ENCODE measurements at regions of chr7 and their contacts with region 1.

Region 1: GRCh38 chr7:94289071-94289470 is 105.6 kb upstream of the COL1A2 start:
- DNase-seq: peak; percentile 64 to 86
- ATAC-seq: peak; percentile 94 to 99
- H3K4me3 ChIP-seq: no peak overlapping the region
- H3K27ac ChIP-seq: 0 out of 6 replicates have a peak overlapping the region, but pooled peaks of 1 of the 2 experiments have one; percentile 17
- H3K4me1 ChIP-seq: 0 out of 3 replicates have a peak, but pooled peaks cover 5% of the 10 kb centered on the region
- CTCF ChIP-seq: peak; percentile 91
- EP300 ChIP-seq: no peak
- POLR2A ChIP-seq: no peak
- RAD21 ChIP-seq: peak; percentile 93 to 100

Region 2: DNA sequence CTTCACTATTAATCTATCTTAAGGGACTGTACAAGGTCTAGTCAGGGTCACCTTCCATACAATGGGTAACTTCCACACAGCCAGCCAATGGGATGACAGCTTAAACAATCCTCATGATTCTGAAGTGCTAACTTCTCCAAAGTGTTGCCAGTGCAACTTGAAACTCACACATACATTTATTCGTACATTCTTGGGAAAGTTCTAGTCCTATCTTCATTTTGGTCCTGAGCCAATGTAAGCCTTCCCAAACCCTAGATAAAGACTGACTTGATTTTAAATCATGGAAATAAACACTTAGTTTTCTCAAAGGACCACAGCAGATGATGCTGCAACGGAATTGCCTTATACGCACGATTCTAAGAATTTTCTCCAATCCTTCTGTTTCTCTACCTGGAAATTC is 11.8 kb before region 1 on chr7:
- CTCF ChIA-PET with region 1: interaction called, 12 read pairs
- POLR2A ChIA-PET with region 1: no interaction called
- DNase-seq: no peak
- ATAC-seq: peak in 1 of 2 experiments; percentile 53; a peak in 3 of 6 replicates
- H3K4me3 ChIP-seq: no peak overlapping the region
- H3K27ac ChIP-seq: no peak overlapping the region
- H3K4me1 ChIP-seq: 0 out of 3 replicates have a peak, but pooled peaks cover 5% of the 10 kb centered on the region
- CTCF ChIP-seq: no peak
- EP300 ChIP-seq: no peak
- POLR2A ChIP-seq: no peak
- RAD21 ChIP-seq: no peak

Region 3: GRCh38 chr7:94301024-94301586 is 12.0 kb after region 1 on chr7:
- CTCF ChIA-PET with region 1: interaction called, 49 read pairs
- POLR2A ChIA-PET with region 1: no interaction called
- DNase-seq: peak; percentile 93 to 95
- ATAC-seq: peak; percentile 99 to 100
- H3K4me3 ChIP-seq: no peak overlapping the region
- H3K27ac ChIP-seq: peak overlapping the region; percentile 91 to 92
- H3K4me1 ChIP-seq: peaks cover 67% of the 10 kb centered on the region
- CTCF ChIP-seq: no peak
- EP300 ChIP-seq: peak; percentile 56 to 61; a peak in 2 of 5 replicates
- POLR2A ChIP-seq: no peak
- RAD21 ChIP-seq: peak; percentile 22 to 41; a peak in 2 of 5 replicates

Region 4: DNA sequence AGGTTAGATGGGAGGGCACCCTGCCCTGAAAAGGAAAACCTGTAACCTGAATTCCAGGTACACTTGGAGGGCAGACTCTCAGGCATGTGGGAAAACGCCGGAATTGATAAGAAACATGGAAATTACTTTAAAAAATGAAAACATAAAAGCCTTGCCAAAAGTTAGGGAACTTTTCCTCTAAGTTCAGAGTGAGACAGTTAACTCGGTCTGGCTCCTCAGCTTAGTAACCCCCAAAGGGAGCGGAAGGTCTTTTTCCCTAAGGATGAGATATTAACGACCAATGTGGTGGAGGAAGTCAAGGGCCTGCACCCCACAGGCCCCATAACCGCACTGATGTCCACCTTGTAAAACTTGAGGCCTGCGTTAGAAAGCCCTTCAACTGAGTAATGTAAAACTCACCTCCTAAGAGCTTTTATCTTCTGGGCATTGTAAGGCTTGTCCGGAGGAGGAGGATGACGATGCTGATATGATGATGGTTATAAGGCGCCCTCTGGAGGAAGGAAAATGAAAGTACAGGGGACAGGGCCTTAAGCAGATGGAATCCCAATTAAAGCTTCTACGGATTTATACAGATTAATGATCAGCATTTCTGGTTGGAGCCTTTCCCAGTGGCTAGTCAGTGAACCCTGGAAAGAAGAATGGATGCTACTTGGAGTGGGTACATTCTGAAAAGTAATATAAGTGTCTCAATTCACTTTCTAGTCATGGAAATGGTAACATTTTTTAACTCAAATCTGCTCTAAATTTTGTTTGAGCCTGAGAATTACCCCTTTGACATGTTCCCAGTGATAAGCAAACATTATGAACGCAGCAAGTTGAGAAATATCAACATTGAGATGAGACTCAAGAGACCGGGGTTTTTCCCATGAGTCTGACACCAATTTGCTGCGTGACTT is 106.3 kb after region 1 on chr7:
- CTCF ChIA-PET with region 1: interaction called, 28 read pairs
- POLR2A ChIA-PET with region 1: no interaction called
- DNase-seq: peak; percentile 47 to 76
- ATAC-seq: peak; percentile 44 to 86; a peak in 5 of 6 replicates
- H3K4me3 ChIP-seq: no peak overlapping the region
- H3K27ac ChIP-seq: peak overlapping the region in 1 of 2 experiments; percentile 19; a peak in 1 of 6 replicates
- H3K4me1 ChIP-seq: peaks cover 19% of the 10 kb centered on the region
- CTCF ChIP-seq: peak; percentile 54
- EP300 ChIP-seq: no peak
- POLR2A ChIP-seq: no peak
- RAD21 ChIP-seq: peak; percentile 73 to 85